ENCODE measurements at regions of chr1 and their contacts with region 1.

Region 1: GRCh38 chr1:46724991-46725735 is 6.2 kb upstream of the EFCAB14 start:
- DNase-seq: peak; percentile 71 to 74 (median 73)
- H3K4me3 ChIP-seq: no peak overlapping the region
- H3K4me3 Mint-ChIP-seq: no peak overlapping the region
- H3K27ac ChIP-seq: no peak overlapping the region
- H3K27ac Mint-ChIP-seq: no peak overlapping the region
- H3K4me1 ChIP-seq: peaks cover 4% of the 10 kb centered on the region
- H3K4me1 Mint-ChIP-seq: peaks cover 4 to 9% (median 5%) of the 10 kb centered on the region in 4 donors
- H3K27me3 ChIP-seq: no peaks in the 10 kb centered on the region
- H3K27me3 Mint-ChIP-seq: peaks cover 17 to 25% of the 10 kb centered on the region in 2 donors

Region 2: GRCh38 chr1:46406881-46407608 is 318.1 kb before region 1 on chr1:
- CTCF ChIA-PET with region 1: no interaction called
- POLR2A ChIA-PET with region 1: no interaction called
- intact Hi-C with region 1: loop called (anchors 2 kb)
- DNase-seq: no peak
- H3K4me3 ChIP-seq: no peak overlapping the region
- H3K4me3 Mint-ChIP-seq: peak overlapping the region in 3 of 8 donors; percentile 38 to 58 (median 41)
- H3K27ac ChIP-seq: no peak overlapping the region
- H3K27ac Mint-ChIP-seq: peak overlapping the region in 6 of 7 donors; percentile 9 to 79 (median 60)
- H3K4me1 ChIP-seq: peaks cover 16% of the 10 kb centered on the region
- H3K4me1 Mint-ChIP-seq: peaks cover 4 to 8% (median 7%) of the 10 kb centered on the region in 4 donors
- H3K27me3 ChIP-seq: no peaks in the 10 kb centered on the region
- H3K27me3 Mint-ChIP-seq: no peaks in the 10 kb centered on the region

Region 3: DNA sequence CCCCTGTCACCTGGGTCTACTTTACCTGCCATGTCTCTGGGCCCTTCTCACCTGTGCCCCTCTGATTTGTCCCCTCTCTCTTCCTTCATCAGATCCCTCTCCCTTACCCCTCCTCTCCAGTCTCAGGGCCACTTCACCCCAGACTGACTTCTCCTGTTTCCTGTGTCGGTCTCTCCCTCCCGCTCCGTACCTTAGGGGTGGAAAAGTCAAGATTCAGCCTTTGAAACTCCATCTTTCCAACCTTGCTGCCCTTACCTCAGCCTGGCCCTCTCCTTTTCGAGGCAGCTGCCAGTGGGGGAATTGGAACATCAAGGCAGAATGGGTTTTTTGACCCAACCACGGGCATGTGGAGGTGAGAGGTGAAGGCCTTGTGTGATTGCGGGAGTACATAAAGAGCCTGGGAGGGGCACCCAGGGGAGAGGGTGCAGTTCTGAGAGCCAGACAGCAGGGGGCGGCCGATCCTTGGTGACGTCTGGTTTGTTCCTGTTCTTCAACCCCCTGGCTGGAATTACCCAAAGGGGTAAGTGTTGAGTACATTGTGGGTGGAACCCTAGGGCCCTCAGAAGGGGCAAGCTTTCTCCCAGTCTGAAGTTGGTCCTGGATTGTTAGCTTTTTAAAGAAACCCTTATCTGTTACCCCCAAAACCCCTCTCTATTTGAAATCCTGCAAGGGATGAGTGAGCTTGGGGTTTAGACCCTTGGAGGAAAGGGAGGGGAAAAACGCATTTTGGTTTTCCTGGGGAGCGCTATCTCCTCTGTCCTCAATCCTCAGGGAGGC is 247.8 kb before region 1 on chr1:
- CTCF ChIA-PET with region 1: interaction called, 8 read pairs
- POLR2A ChIA-PET with region 1: no interaction called
- intact Hi-C with region 1: loop called (anchors 1 kb)
- DNase-seq: peak; percentile 64 to 73 (median 67)
- H3K4me3 ChIP-seq: no peak overlapping the region
- H3K4me3 Mint-ChIP-seq: no peak overlapping the region
- H3K27ac ChIP-seq: no peak overlapping the region
- H3K27ac Mint-ChIP-seq: no peak overlapping the region
- H3K4me1 ChIP-seq: no peaks in the 10 kb centered on the region
- H3K4me1 Mint-ChIP-seq: peaks cover 0 to 5% (median 0%) of the 10 kb centered on the region in 4 donors
- H3K27me3 ChIP-seq: no peaks in the 10 kb centered on the region
- H3K27me3 Mint-ChIP-seq: peaks cover 6 to 33% of the 10 kb centered on the region in 2 donors

Region 4: DNA sequence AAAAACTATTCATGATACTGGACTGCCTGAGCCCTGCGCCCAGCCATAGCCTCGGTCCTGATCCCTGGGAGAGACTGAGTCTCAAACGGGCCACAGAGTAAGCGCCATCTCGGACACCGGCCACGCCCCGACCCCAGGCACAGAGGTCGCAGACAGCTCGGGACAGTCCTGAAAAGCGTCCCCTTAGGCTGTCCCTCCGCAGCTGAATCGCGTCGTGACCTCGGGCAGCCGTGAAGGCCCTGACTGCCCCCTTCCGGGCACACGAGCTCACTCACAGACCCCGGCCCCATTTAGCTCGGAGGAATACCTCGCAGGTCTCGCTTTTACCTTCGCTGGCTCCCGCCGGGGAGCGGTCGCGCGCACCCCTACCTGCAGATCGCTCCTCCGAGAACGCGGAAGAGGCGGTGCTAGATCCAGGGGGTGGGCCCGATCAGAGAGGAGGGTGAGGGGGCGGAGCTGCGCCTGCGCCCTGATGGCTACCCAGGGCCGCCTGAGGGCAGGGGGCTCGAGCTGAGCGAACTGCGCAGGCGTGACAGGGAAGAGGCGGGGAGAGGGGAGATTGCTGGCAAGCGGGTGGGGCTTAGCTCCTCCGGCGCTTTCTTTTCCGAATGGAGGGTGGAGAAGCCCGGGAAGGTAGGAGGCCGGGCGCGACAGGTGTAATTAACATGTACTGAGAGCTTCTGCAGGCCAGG is 121.2 kb before region 1 on chr1 and contains the start of gene MKNK1:
- CTCF ChIA-PET with region 1: interaction called, 16 read pairs
- POLR2A ChIA-PET with region 1: interaction called, 16 read pairs
- intact Hi-C with region 1: no loop called
- DNase-seq: peak; percentile 98 to 99 (median 99)
- H3K4me3 ChIP-seq: peak within 1 kb of the TSS; percentile 63 to 86
- H3K4me3 Mint-ChIP-seq: peak within 1 kb of the TSS; percentile 93 to 97 (median 94)
- H3K27ac ChIP-seq: peak within 1 kb of the TSS; percentile 71
- H3K27ac Mint-ChIP-seq: peak within 1 kb of the TSS; percentile 90 to 97 (median 95)
- H3K4me1 ChIP-seq: peaks cover 57% of the 10 kb centered on the region
- H3K4me1 Mint-ChIP-seq: peaks cover 49 to 77% (median 63%) of the 10 kb centered on the region in 4 donors
- H3K27me3 ChIP-seq: no peaks in the 10 kb centered on the region
- H3K27me3 Mint-ChIP-seq: no peaks in the 10 kb centered on the region
- total RNA-seq, gene MKNK1: 54.3 to 54.9 TPM

Region 5: GRCh38 chr1:46677339-46677738 is 47.8 kb before region 1 on chr1:
- CTCF ChIA-PET with region 1: interaction called, 12 read pairs
- POLR2A ChIA-PET with region 1: interaction called, 5 read pairs
- intact Hi-C with region 1: no loop called
- DNase-seq: no peak
- H3K4me3 ChIP-seq: no peak overlapping the region
- H3K4me3 Mint-ChIP-seq: no peak overlapping the region
- H3K27ac ChIP-seq: peak overlapping the region; percentile 47
- H3K27ac Mint-ChIP-seq: peak overlapping the region; percentile 26 to 97 (median 88)
- H3K4me1 ChIP-seq: peaks cover 22% of the 10 kb centered on the region
- H3K4me1 Mint-ChIP-seq: peaks cover 18 to 35% (median 22%) of the 10 kb centered on the region in 4 donors
- H3K27me3 ChIP-seq: no peaks in the 10 kb centered on the region
- H3K27me3 Mint-ChIP-seq: no peaks in the 10 kb centered on the region

Region 6: DNA sequence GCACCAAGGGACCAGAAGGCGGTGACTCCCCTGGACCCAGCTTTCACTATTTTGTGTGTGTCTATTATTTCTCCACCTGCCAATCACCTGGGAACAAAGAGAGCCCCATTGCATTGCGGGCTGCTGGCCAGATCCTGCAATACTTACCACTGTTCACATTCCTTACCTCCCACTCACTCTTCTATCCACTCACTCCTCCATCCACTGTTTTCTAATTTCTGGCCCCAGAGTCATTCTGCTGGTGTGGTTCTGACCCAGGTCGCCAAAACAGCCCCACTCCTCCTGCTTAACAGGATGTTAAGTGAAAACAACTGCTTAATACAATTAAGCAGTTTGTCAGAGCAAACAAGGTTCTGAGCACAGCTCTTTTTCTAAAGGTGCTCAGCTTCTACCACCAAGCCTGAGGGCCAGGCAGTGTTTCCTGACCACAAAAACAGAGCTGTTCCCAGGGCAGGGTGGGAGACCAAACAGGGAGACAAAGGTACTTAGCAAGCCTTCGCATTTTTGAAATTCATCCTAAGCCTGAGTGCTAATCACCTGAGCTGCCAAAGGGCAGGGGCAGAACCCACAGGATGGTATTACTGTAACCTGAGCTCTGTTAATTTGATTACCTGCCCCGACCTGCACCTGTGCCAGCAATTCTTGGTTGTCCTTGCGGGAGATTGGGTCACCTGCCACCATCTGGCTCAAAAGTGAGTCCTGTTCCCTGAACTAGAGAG is 32.2 kb after region 1 on chr1:
- CTCF ChIA-PET with region 1: no interaction called
- POLR2A ChIA-PET with region 1: no interaction called
- intact Hi-C with region 1: no loop called
- DNase-seq: no peak
- H3K4me3 ChIP-seq: no peak overlapping the region
- H3K4me3 Mint-ChIP-seq: no peak overlapping the region
- H3K27ac ChIP-seq: no peak overlapping the region
- H3K27ac Mint-ChIP-seq: no peak overlapping the region
- H3K4me1 ChIP-seq: no peaks in the 10 kb centered on the region
- H3K4me1 Mint-ChIP-seq: no peaks in the 10 kb centered on the region
- H3K27me3 ChIP-seq: peaks cover 4% of the 10 kb centered on the region
- H3K27me3 Mint-ChIP-seq: peaks cover 22 to 36% of the 10 kb centered on the region in 2 donors